ENCODE measurements at regions of chr16 and their contacts with region 1.

Region 1: GRCh38 chr16:84952335-84953189 is 58.8 kb downstream of the ZDHHC7 start:
- DNase-seq: peak in 5 of 6 donors; percentile 72 to 86 (median 74)
- ATAC-seq: peak; percentile 74 to 92 (median 84)
- H3K4me3 ChIP-seq: no peak overlapping the region
- H3K27ac ChIP-seq: peak overlapping the region in 2 of 4 donors; percentile 61 to 76
- H3K4me1 ChIP-seq: peaks cover 8 to 26% (median 8%) of the 10 kb centered on the region in 3 donors
- H3K27me3 ChIP-seq: no peaks in the 10 kb centered on the region
- CTCF ChIP-seq: peak; percentile 84 to 97 (median 92)

Region 2: GRCh38 chr16:84754353-84754856 is 198.2 kb before region 1 on chr16:
- intact Hi-C with region 1: loop called in 1 of 3 experiments (anchors 5 kb)
- DNase-seq: peak in 3 of 6 donors; percentile 63 to 79 (median 67)
- ATAC-seq: peak; percentile 82 to 95 (median 94)
- H3K4me3 ChIP-seq: no peak overlapping the region
- H3K27ac ChIP-seq: peak overlapping the region in 2 of 4 donors; percentile 11 to 59
- H3K4me1 ChIP-seq: peaks cover 0 to 10% (median 3%) of the 10 kb centered on the region in 3 donors
- H3K27me3 ChIP-seq: no peaks in the 10 kb centered on the region
- CTCF ChIP-seq: peak; percentile 46 to 77 (median 74)

Region 3: DNA sequence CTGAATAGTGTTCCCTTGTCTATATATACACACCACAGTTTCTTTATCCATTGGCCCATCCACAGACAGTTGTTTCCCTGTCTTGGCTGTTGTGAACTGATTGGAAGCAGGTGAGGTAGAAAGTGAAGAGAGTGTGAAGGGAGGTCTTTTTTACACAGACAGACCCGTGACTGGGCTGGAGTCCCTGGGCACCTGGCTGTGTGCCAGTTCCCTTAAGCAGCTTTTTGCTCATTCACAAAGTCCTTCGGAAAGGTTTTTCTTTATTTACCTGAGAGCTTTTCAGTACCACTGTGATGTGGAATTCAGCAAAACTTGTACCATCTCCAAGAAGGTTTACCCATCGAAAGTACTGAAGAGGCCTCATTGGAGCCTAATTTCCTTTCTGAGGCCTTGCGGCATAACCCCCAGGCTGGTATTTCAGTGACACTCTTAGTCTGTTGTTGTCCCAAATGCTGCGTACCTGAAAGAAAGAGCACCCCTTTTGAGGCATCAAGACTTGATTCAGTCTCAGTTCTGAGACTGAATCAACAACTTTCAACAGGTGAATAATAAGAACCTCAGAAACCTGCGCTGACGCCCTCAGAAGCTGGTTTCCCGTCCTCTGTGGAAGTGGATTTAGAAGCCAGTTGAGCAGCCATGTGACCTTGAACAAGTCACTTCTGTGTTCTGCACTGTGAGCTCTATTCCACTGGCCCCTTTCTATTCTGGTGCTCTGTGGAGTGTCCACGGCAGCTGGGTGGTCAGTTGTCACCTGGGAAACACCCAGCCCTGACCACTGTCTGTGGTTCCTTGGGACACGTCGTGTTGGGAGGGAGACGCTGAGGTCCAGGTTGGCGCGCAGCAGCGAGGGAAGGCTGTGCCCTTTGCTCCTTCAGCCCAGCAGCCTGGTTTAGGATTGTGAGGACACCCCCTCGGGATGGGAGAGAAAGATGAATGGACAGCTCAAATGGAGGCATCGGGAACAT is 186.7 kb before region 1 on chr16:
- intact Hi-C with region 1: loop called in 1 of 3 experiments (anchors 10 kb)
- DNase-seq: no peak
- ATAC-seq: no peak
- H3K4me3 ChIP-seq: no peak overlapping the region
- H3K27ac ChIP-seq: no peak overlapping the region
- H3K4me1 ChIP-seq: no peaks in the 10 kb centered on the region
- H3K27me3 ChIP-seq: no peaks in the 10 kb centered on the region
- CTCF ChIP-seq: no peak

Region 4: DNA sequence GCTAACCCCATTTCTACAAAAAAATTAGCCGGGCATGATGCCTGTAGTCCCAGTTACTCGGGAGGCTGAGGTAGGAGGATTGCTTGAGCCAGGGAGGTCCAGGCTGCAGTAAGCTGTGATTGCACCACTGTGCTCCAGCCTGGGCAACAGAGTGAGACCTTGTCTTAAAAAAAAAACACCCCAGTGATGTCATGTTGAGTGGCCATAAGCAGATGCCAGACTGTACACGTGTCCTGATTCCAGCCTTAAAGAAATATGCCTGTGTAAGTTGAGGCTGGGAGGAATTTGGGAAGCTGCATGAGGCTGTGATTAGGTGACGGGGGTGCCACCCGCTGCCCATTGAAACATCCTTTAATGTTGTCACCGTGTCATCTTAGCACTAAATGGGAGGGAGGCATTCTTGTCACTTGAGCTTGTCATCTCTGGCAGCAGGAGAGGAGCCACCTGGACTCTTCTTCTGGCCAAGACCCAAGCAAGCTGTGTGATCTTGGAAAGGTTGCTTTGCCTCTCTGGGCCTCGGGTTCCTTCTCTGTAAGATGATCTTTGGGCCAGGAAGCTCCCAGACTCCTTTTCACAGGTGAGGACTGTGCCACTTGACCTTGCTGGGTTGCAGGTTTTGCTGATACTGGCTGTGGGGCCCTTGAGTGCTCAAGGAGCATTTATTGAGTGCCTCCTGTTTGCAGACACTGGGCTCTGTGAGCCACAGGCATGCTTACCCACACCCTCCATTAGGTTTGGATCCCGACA is 258.0 kb after region 1 on chr16:
- intact Hi-C with region 1: no loop called
- DNase-seq: no peak
- ATAC-seq: no peak
- H3K4me3 ChIP-seq: no peak overlapping the region
- H3K27ac ChIP-seq: no peak overlapping the region
- H3K4me1 ChIP-seq: peaks cover 3 to 33% (median 20%) of the 10 kb centered on the region in 3 donors
- H3K27me3 ChIP-seq: no peaks in the 10 kb centered on the region
- CTCF ChIP-seq: no peak

Measured in pancreas (tissue), 10 donors.